ACHN (cell line): ENCODE measurements at regions of chr12 and their contacts with region 1.

Region 1: DNA sequence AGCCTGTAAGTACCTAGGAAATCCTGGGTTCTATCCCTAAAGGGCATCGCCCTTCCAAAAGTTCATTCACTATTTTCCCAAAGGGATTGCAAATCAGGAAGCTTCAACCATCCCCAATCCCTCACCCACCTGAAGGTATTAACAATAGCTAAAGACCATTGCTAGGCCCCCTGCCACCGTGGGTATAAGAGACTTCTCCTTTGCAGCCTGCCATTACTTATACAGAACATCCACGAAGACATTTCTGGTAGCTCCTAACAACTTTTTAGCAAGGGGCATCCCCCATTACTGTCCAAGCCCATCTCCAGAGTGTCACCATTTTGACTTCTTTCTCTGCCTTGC is 384 bp upstream of the SMUG1 start:
- DNase-seq: no peak

Region 2: DNA sequence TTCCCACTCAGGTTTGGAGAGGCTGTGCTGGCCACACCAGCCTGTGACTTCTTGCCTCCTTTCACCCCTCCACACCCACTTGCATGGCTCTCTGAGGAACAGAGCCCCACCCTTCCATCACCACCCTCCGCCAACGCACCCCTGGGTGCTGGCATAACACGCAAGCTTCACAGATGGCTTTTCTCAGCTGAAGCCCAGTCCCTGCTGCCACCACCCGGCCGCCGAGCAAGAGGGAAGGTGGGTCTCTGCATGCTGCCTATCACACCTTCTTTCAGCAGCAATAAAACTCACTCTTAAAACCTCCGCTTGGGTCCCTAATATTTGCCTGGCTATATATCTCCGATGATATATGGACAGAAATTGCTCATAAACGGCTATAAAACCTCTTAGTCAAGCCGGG is 42.0 kb before region 1 on chr12:
- in situ Hi-C with region 1: loop called (anchors 5 kb)
- DNase-seq: no peak